ENCODE measurements at regions of chr9 and their contacts with region 1.

Region 1: GRCh38 chr9:70111042-70111602 is 67.5 kb downstream of the MAMDC2 start:
- DNase-seq: peak; percentile 60

Region 2: DNA sequence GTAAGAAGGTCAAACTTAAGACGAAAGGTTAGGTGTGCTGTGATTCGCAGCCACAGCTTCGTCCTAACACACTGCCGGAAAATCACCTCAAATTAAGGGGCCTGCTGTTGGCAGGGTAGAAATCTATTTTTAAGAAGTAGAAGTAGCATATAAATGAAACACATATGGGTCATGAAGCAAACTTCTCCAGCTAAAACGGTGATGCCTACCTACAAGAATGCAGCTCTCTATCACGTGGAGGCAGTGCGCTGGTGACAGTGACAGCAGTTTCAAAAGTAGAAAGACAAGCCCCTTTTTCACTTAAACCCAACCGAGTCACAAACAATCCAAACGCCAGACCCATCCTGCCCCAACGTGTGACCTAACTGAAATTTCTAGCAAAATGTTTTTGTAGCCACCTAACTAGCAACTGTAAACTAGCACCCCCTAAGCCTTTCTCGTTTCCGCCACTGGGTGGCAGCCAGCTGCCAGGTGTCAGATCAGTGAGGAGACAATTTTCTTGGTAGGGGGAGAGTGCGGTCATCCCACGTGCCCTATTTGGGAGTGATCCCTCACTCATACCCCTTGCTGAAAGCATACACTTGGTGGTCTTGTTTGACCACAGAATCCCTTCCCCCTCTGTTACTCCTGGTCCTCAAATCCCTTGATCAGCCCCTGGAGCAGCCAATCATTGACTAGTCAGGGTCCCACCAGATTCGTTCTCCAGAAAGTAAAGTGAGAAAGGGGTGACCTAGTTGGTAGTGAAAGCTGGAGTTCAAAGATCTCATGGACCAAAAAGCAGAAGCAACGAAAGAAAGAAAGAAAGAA is 139.3 kb before region 1 on chr9:
- CTCF ChIA-PET with region 1: interaction called, 16 read pairs
- POLR2A ChIA-PET with region 1: no interaction called
- DNase-seq: peak; percentile 70

Region 3: DNA sequence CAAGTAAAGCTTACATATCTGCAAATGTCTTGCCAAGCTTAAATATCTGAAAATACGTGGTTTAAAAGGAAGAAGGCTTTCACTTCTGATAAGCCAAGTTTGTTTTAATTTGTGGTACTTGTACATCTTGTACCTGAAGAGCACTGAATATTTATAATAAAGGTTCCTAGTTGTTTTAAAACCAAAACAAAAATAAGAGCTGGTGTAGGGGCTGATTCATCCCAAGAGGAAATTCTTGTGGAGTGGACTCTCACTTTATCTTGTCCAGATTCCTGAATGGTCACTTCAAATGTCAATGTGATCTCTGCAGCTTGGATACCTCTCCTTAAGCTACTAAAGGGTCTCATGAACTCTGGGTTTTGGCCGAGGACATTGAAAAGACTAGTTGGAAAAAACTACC is 37.9 kb before region 1 on chr9:
- CTCF ChIA-PET with region 1: no interaction called
- POLR2A ChIA-PET with region 1: no interaction called
- DNase-seq: no peak

Region 4: GRCh38 chr9:70133253-70134208 is 22.4 kb after region 1 on chr9:
- CTCF ChIA-PET with region 1: no interaction called
- POLR2A ChIA-PET with region 1: no interaction called
- DNase-seq: no peak

Region 5: DNA sequence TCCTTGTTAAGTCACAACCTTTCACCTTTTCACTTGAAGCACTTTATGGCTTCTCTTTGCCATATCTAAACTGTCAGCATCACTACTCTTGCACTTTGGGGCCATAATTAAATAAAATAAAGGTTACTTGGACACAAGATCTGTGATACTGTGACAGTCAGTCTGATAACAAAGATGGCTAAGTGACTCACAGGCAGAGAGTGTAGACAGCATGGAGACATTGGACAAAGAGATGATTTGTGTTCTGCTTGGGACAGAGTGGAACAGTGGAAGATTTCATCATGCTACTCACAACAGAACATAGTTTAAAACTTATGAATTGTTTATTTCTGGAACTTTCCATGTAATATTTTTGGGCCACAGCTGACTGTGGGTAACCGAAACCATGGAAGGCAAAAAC is 66.0 kb after region 1 on chr9:
- CTCF ChIA-PET with region 1: no interaction called
- POLR2A ChIA-PET with region 1: no interaction called
- DNase-seq: no peak